ENCODE measurements at regions of chr1 and their contacts with region 1.

Region 1: DNA sequence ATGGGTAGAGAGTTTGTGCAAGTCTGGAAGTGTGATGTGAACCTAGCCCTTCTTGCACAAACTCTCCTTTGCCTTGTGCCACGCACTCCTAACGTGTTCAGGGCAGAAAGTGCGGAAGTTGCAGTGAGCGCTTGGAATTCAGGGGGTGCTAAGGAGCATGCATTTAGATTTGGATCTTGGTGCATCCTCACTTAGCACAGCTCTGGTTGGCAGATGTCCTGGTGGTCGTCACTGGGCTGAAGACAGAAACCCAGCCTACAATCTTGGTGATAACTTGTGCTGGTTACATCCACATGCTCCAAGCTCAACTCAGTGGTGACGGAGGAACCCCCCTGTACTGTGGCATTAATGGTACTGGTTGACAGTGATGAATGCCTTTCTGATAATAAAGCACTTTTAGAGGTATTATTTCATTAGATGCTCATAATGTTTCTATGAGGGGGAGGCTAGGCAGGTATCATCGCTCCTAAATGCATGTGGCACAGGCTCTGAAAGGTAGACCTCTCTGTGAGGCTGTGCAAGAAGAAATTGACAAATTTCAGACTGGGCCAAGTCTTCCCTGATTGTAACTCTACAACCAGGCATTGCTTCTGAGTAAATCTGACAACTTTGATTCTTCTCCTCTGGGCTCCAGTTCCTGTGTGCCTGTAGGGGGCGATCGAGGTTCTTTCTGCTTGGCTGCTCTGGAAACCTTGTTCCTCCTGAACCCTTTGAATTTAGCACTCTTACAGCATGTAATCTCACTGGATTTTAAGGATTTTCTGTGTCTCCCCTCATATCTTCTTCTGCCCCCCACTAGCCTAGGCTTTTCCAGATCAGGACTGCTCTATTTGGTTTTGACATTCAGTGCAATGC is 40.6 kb downstream of the MAPKAPK2 start:
- DNase-seq: peak in 1 of 5 donors; percentile 65
- ATAC-seq: no peak
- H3K4me3 ChIP-seq: no peak overlapping the region
- H3K27ac ChIP-seq: peak overlapping the region in 9 of 12 donors; percentile 14 to 95 (median 84)
- H3K4me1 ChIP-seq: peaks cover 14 to 89% (median 80%) of the 10 kb centered on the region in 12 donors
- H3K27me3 ChIP-seq: no peaks in the 10 kb centered on the region
- CTCF ChIP-seq: peak in 11 of 12 donors; percentile 30 to 66 (median 56)
- POLR2A ChIP-seq: no peak

Region 2: DNA sequence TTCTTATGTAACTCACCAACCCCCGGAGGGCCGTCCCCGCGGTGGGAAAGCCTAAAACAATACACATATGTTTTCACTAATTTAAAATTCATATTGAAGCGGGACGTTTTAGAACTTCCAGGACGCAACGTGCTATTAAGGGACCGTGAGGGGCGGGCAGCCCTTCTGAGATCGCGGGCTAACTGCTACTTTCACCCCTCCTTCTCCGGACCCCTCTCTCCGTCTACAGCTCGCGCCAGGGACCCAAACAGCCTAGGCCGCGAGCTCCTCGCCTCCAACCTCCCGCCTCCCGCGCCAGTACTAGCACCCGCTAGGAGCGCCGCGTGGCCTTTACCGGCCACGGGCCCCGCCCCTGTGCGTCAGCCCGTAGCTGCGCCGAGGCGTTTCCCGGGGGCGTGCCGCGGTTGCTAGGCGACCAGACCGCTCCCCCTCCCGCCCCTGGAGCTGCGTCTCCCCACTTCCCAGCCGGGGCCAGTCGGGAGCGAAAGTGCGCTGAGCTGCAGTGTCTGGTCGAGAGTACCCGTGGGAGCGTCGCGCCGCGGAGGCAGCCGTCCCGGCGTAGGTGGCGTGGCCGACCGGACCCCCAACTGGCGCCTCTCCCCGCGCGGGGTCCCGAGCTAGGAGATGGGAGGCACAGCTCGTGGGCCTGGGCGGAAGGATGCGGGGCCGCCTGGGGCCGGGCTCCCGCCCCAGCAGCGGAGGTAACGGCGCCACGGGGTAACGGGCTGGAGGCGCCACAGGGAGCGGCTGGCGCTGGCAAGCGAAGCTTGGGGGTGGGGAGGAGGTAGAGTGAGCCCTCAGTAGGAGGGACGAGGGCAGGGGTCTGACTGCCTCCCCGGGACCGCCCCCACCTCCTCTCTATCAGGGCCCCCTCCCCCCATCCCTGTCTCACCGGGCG is 90.0 kb before region 1 on chr1 and contains the start of gene DYRK3:
- intact Hi-C with region 1: loop called in 8 of 10 experiments (anchors 5 to 10 kb)
- DNase-seq: peak; percentile 96 to 97 (median 97)
- ATAC-seq: peak; percentile 94 to 99 (median 98)
- H3K4me3 ChIP-seq: peak within 1 kb of the TSS; percentile 73 to 97 (median 90)
- H3K27ac ChIP-seq: peak within 1 kb of the TSS; percentile 19 to 95 (median 89)
- H3K4me1 ChIP-seq: peaks cover 0 to 54% (median 26%) of the 10 kb centered on the region in 12 donors
- H3K27me3 ChIP-seq: no peaks in the 10 kb centered on the region
- CTCF ChIP-seq: peak in 6 of 12 donors; percentile 9 to 41 (median 29)
- POLR2A ChIP-seq: peak; percentile 41 to 99
- total RNA-seq, gene DYRK3: 11.2 to 32.5 (median 15.9) TPM

Region 3: DNA sequence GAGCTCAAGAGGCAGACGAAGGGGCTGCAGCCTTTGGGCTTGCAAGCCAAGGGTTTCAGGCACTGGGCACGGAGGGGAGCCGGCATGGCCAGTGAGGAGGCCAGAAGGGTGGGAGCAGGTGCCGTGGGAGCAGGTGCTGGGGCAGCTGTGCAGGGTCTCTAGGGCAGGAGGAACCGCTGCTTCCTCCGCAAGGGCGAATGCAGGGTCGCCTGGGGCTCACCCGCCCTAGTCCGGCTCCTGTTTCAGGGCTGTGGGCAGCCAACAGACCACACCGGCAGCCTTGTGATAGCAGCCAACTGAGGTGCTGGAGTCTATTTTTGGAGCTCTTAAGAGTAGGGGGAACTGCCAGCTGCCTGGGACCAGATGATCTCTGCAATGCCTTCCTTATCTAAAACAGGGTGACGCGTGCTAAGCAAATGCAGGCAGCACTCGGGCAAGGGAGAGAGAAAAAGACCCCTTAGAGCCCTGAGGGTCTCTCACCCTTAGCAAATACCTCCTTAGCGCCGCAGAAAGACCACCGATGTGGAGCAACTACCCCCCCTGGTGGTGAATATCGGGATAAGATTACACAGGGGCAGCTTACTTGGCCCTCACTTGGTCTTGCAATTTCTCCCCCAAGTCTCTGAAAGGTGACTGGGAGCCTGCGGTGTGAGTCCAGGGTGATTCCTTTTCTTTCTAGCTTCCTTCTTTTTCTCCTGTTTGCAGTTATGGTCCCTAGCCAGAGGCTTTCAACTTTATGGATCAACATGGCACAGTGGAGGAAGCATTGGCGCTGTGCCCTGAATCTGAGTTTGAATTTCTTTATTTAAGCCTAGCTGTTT is 61.3 kb before region 1 on chr1:
- intact Hi-C with region 1: loop called in 4 of 10 experiments (anchors 2 to 10 kb)
- DNase-seq: peak; percentile 75 to 86 (median 76)
- ATAC-seq: peak; percentile 71 to 80 (median 76)
- H3K4me3 ChIP-seq: peak overlapping the region in 10 of 12 donors; percentile 1 to 46 (median 30)
- H3K27ac ChIP-seq: peak overlapping the region; percentile 78 to 96 (median 88)
- H3K4me1 ChIP-seq: peaks cover 0 to 62% (median 27%) of the 10 kb centered on the region in 12 donors
- H3K27me3 ChIP-seq: peaks cover 0 to 10% (median 0%) of the 10 kb centered on the region in 9 donors
- CTCF ChIP-seq: peak; percentile 67 to 90 (median 84)
- POLR2A ChIP-seq: peak in 1 of 2 donors; percentile 59

Region 4: GRCh38 chr1:206693029-206693428 is 32.3 kb before region 1 on chr1:
- intact Hi-C with region 1: loop called in 8 of 10 experiments (anchors 2 to 5 kb)
- DNase-seq: peak; percentile 86 to 94 (median 88)
- ATAC-seq: peak; percentile 77 to 89 (median 82)
- H3K4me3 ChIP-seq: peak overlapping the region in 8 of 12 donors; percentile 4 to 29 (median 18)
- H3K27ac ChIP-seq: peak overlapping the region; percentile 79 to 99 (median 96)
- H3K4me1 ChIP-seq: peaks cover 34 to 100% (median 98%) of the 10 kb centered on the region in 12 donors
- H3K27me3 ChIP-seq: no peaks in the 10 kb centered on the region
- CTCF ChIP-seq: no peak
- POLR2A ChIP-seq: no peak

Region 5: DNA sequence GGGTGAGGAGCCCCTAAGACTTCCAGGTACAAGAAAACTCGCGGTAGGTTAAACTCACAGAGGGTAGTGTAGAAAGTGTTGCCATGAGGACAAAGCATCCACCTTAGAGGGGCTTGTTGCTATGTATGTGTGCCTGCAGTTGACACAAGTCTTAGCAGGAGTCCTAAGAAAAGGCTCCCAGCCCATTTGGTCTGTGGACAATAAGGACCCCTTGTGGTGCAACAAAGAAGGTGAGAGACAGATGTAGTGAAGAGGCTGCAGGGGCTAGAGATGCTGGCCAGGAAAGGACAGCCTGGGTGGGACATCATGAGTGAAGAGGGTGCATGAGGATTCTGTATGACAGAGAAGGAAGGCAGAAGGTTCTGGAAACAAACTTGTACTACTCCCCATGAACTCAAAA is 83.3 kb after region 1 on chr1:
- intact Hi-C with region 1: loop called in 4 of 10 experiments (anchors 5 to 10 kb)
- DNase-seq: no peak
- ATAC-seq: peak; percentile 51 to 80 (median 78)
- H3K4me3 ChIP-seq: no peak overlapping the region
- H3K27ac ChIP-seq: no peak overlapping the region
- H3K4me1 ChIP-seq: peaks cover 0 to 18% (median 0%) of the 10 kb centered on the region in 12 donors
- H3K27me3 ChIP-seq: no peaks in the 10 kb centered on the region
- CTCF ChIP-seq: peak; percentile 15 to 54 (median 38)
- POLR2A ChIP-seq: no peak